ENCODE measurements at regions of chr12 and their contacts with region 1.

Region 1: GRCh38 chr12:54259194-54260011 is 20.5 kb downstream of the CBX5 start:
- DNase-seq: peak in 33 of 35 experiments; percentile 8 to 65 (median 34)
- ATAC-seq: peak in 3 of 4 experiments; percentile 70 to 96 (median 73)
- H3K4me3 ChIP-seq: peak overlapping the region in 1 of 2 donors; percentile 26
- H3K4me3 Mint-ChIP-seq: peak overlapping the region; percentile 60 to 75 (median 63)
- H3K27ac ChIP-seq: no peak overlapping the region
- H3K27ac Mint-ChIP-seq: peak overlapping the region; percentile 31 to 58
- H3K4me1 ChIP-seq: peaks cover 7 to 14% of the 10 kb centered on the region in 2 experiments
- H3K4me1 Mint-ChIP-seq: peaks cover 22 to 29% (median 26%) of the 10 kb centered on the region in 3 donors
- H3K27me3 ChIP-seq: no peaks in the 10 kb centered on the region
- H3K27me3 Mint-ChIP-seq: no peaks in the 10 kb centered on the region

Region 2: DNA sequence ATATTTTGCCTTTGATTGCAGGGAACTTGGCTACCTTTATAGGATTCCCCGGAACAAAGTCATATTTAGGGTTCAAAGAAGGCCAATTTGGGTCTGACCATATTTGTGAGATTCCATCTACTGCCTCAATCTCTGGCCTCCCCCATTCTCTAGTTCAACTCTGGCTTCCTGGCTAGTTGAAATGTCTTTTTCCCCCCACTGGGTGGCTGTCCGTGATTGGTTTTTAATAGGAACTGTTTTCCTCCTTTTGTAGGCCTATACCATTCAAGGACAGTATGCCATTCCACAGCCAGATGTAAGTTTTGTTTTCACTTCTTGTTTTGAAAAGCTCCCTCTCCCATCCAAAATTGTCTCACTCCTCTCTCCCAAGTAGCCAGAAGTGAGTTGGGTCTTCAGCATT is 793.7 kb before region 1 on chr12:
- CTCF ChIA-PET with region 1: no interaction called
- POLR2A ChIA-PET with region 1: interaction called in 1 of 2 experiments, 10 read pairs
- DNase-seq: no peak
- ATAC-seq: no peak
- H3K4me3 ChIP-seq: no peak overlapping the region
- H3K4me3 Mint-ChIP-seq: no peak overlapping the region
- H3K27ac ChIP-seq: no peak overlapping the region
- H3K27ac Mint-ChIP-seq: peak overlapping the region in 1 of 2 donors; percentile 34
- H3K4me1 ChIP-seq: peaks cover 0 to 10% of the 10 kb centered on the region in 2 experiments
- H3K4me1 Mint-ChIP-seq: peaks cover 32 to 42% (median 34%) of the 10 kb centered on the region in 3 donors
- H3K27me3 ChIP-seq: no peaks in the 10 kb centered on the region
- H3K27me3 Mint-ChIP-seq: no peaks in the 10 kb centered on the region

Region 3: DNA sequence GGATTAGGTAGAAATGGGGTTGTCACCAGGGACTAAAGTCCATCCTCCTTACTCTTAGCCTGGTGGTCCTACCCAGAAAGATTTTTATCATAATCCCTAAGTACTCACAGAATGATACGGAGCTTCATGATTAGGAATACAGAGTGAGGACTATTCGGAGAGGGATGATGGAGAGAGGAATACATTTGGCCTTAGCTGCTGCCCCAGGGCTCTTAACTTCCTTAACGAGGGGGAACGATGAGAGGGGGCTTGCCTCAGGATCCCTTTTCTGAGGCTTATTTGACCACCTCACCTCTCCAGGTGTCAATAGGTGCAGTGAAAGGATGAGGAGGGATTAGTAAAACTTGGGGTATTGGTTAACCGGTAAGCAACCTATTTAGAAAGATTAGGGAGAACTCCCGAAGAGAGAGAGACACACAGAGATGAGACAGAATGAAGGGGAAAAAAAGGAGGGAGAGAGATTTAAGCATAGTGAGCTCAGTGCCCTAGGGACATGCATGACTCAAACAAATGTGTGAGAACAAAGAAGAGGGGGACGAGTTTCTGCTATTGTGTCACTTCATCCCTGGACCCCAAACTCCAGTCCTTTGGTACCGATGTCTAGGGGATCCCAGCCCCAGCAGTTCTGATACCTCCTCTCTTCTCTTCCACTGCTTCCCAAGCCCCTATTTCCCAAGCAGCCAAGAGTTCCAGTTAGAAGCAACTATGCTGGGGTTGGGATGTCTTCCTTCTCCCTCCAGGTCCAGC is 40.3 kb after region 1 on chr12:
- CTCF ChIA-PET with region 1: interaction called in 1 of 2 experiments, 12 read pairs
- POLR2A ChIA-PET with region 1: no interaction called
- DNase-seq: no peak
- ATAC-seq: no peak
- H3K4me3 ChIP-seq: no peak overlapping the region
- H3K4me3 Mint-ChIP-seq: peak overlapping the region in 1 of 3 donors; percentile 1
- H3K27ac ChIP-seq: no peak overlapping the region
- H3K27ac Mint-ChIP-seq: peak overlapping the region in 1 of 2 donors; percentile 29
- H3K4me1 ChIP-seq: peaks cover 0 to 25% of the 10 kb centered on the region in 2 experiments
- H3K4me1 Mint-ChIP-seq: peaks cover 16 to 32% (median 19%) of the 10 kb centered on the region in 3 donors
- H3K27me3 ChIP-seq: peaks cover 0 to 43% of the 10 kb centered on the region in 2 experiments
- H3K27me3 Mint-ChIP-seq: peaks cover 38 to 40% of the 10 kb centered on the region in 2 donors